Body of pancreas (tissue), 4 donors: ENCODE measurements at regions of chr11 and their contacts with region 1.

Region 1: GRCh38 chr11:130427581-130428315 is 661 bp downstream of the ADAMTS8 start:
- DNase-seq: peak in 1 of 4 donors; percentile 17
- ATAC-seq: peak; percentile 7
- H3K4me3 ChIP-seq: no peak overlapping the region
- H3K27ac ChIP-seq: no peak overlapping the region
- H3K4me1 ChIP-seq: peaks cover 19% of the 10 kb centered on the region
- H3K27me3 ChIP-seq: peaks cover 0 to 19% of the 10 kb centered on the region in 2 donors
- CTCF ChIP-seq: no peak
- POLR2A ChIP-seq: no peak

Region 2: DNA sequence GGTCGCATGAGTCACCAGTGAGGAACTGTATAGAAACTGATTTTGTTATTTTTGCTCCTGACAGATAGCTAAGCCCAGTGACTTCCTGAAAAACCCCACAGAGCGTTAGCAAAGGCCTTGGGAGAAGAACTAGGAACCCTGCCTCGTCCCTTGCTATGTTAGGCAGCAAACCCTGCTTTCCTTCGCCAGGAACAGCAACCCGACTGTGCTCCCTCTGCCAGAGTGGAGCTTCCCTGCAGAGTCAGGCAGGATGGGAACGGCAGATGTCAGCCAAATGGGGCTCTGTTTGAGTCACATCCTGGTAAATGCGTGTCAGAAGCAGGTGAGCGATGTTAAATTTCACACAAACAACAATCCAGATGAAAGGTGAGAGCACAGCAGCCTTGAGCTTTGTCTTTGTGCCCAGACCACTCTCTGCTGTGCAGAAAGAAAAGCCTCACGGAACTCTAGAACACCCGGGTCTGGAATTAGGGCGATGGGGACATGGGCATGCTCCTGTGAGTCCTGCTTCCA is 207.3 kb after region 1 on chr11:
- intact Hi-C with region 1: no loop called
- DNase-seq: no peak
- ATAC-seq: no peak
- H3K4me3 ChIP-seq: no peak overlapping the region
- H3K27ac ChIP-seq: no peak overlapping the region
- H3K4me1 ChIP-seq: no peaks in the 10 kb centered on the region
- H3K27me3 ChIP-seq: no peaks in the 10 kb centered on the region
- CTCF ChIP-seq: no peak
- POLR2A ChIP-seq: no peak

Region 3: GRCh38 chr11:130861902-130862860 is 434.4 kb after region 1 on chr11:
- intact Hi-C with region 1: loop called (anchors 5 kb)
- DNase-seq: peak; percentile 91 to 95 (median 92)
- ATAC-seq: peak; percentile 86
- H3K4me3 ChIP-seq: no peak overlapping the region
- H3K27ac ChIP-seq: no peak overlapping the region
- H3K4me1 ChIP-seq: peaks cover 6% of the 10 kb centered on the region
- H3K27me3 ChIP-seq: no peaks in the 10 kb centered on the region
- CTCF ChIP-seq: peak; percentile 100
- POLR2A ChIP-seq: no peak